Stomach (tissue), 19 donors: ENCODE measurements at regions of chr16 and their contacts with region 1.

Region 1: DNA sequence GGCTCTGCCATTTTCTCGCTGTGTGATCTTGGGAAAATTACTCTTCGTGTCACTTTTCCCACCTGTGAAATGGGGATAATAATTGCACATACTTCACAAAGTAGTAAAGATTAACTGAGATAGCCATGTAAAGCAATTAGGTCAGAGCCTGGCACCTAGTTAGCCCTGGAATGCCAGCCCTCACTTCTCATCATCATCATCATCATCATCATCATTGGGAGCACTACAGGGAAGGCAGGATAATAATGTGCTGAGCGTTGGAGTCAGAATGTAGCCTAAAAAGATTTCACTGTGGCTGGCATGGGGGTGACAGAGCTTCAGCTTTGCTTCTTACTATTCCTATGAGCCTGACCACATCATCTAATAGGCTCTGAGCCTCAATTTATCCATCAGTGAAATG is 362.6 kb downstream of the TOX3 start:
- DNase-seq: no peak
- H3K4me3 ChIP-seq: no peak overlapping the region
- H3K27ac ChIP-seq: no peak overlapping the region
- H3K4me1 ChIP-seq: no peaks in the 10 kb centered on the region
- H3K27me3 ChIP-seq: no peaks in the 10 kb centered on the region
- CTCF ChIP-seq: no peak
- EP300 ChIP-seq: no peak
- POLR2A ChIP-seq: no peak

Region 2: GRCh38 chr16:52383640-52384292 is 199.4 kb after region 1 on chr16:
- intact Hi-C with region 1: no loop called
- DNase-seq: peak in 1 of 2 donors; percentile 35
- H3K4me3 ChIP-seq: no peak overlapping the region
- H3K27ac ChIP-seq: no peak overlapping the region
- H3K4me1 ChIP-seq: peaks cover 0 to 28% (median 18%) of the 10 kb centered on the region in 4 donors
- H3K27me3 ChIP-seq: no peaks in the 10 kb centered on the region
- CTCF ChIP-seq: no peak
- EP300 ChIP-seq: no peak
- POLR2A ChIP-seq: no peak

Region 3: GRCh38 chr16:52422307-52422706 is 238.0 kb after region 1 on chr16:
- intact Hi-C with region 1: no loop called
- DNase-seq: no peak
- H3K4me3 ChIP-seq: no peak overlapping the region
- H3K27ac ChIP-seq: no peak overlapping the region
- H3K4me1 ChIP-seq: no peaks in the 10 kb centered on the region
- H3K27me3 ChIP-seq: no peaks in the 10 kb centered on the region
- CTCF ChIP-seq: no peak
- EP300 ChIP-seq: no peak
- POLR2A ChIP-seq: no peak

Region 4: GRCh38 chr16:52912565-52913173 is 728.3 kb after region 1 on chr16:
- intact Hi-C with region 1: loop called (anchors 10 kb)
- DNase-seq: peak; percentile 85 to 90
- H3K4me3 ChIP-seq: no peak overlapping the region
- H3K27ac ChIP-seq: no peak overlapping the region
- H3K4me1 ChIP-seq: peaks cover 0 to 10% (median 4%) of the 10 kb centered on the region in 4 donors
- H3K27me3 ChIP-seq: no peaks in the 10 kb centered on the region
- CTCF ChIP-seq: peak in 5 of 7 experiments; percentile 62 to 83 (median 68)
- EP300 ChIP-seq: no peak
- POLR2A ChIP-seq: no peak